H1 (cell line): ENCODE measurements at regions of chr11 and their contacts with region 1.

Region 1: GRCh38 chr11:798093-798713 is at the start of gene SLC25A22:
- DNase-seq: peak in 1 of 2 experiments; percentile 93
- H3K4me3 ChIP-seq: peak within 1 kb of the TSS; percentile 65 to 85 (median 81)
- H3K27ac ChIP-seq: no peak within 1 kb of the TSS; the same call in 1 of the 2 replicates
- H3K4me1 ChIP-seq: peaks cover 4 to 20% (median 15%) of the 10 kb centered on the region in 4 experiments
- H3K27me3 ChIP-seq: no peaks in the 10 kb centered on the region
- CTCF ChIP-seq: peak in 2 of 3 experiments; percentile 76 to 87; a peak in 3 of 4 replicates
- EP300 ChIP-seq: no peak
- POLR2A ChIP-seq: peak in 1 of 2 experiments; percentile 28; a peak in 1 of 3 replicates
- RAD21 ChIP-seq: peak; percentile 32 to 68; a peak in 3 of 4 replicates
- total RNA-seq, gene SLC25A22: 48.0 and 54.3 TPM in 2 replicates

Region 2: DNA sequence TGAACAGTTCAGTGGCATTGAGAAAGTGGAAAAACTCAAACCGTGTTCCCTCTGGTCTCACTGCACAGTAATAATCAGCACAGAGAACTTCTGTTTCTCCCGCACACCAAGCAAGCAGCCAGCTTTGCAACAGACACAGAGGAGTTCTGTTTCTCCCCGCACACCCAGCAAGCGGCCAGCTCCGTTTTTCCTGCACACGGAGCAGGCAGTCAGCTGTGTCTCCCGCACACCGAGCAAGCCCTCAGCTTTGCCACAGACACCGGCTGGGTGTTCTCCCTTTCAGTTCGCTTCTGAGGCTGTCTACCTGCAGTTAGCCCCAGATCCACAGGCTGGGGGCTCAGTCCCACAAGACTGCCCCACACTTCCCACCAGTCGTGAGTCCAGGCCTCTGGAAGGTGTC is 60.8 kb before region 1 on chr11:
- CTCF ChIA-PET with region 1: no interaction called
- POLR2A ChIA-PET with region 1: no interaction called
- DNase-seq: no peak
- H3K4me3 ChIP-seq: no peak overlapping the region
- H3K27ac ChIP-seq: no peak overlapping the region
- H3K4me1 ChIP-seq: no peaks in the 10 kb centered on the region
- H3K27me3 ChIP-seq: no peaks in the 10 kb centered on the region; a peak in 1 of 7 replicates
- CTCF ChIP-seq: no peak
- EP300 ChIP-seq: no peak
- POLR2A ChIP-seq: no peak
- RAD21 ChIP-seq: no peak

Region 3: DNA sequence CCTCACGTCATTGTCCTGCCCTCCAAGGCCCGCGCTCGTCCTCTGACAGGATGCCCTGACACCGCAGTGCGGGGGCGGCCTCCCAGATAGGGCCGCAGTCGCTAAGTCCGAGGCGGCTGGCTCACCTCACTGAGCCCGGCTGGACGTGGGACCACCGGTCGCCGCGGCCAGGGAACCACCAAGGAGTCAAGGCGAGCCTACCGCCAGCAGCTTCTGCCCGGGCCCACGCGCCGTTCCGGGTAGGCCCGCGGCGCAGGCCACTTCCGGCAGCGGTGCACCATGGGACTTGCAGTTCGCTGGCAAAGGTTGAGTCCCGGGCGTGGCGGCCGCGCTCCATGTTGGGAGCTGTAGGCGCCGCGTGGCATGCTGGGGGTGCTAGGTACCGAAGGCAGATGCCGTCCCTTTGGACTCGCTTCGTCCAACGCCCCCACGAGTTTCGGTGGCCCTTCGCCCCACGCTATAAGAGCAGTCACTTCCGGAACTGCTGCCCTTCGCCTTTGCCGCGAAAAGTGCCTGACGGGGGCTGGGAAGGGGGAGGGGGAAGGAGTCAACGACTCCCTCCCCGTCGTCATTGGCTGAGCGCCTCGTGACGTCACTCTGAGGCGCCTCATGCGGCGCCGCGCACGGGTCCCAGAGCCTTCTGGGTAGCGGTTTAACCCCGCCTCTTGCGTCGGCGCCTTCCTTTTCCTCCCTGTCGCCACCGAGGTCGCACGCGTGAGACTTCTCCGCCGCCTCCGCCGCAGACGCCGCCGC is 11.3 kb after region 1 on chr11 and contains the start of gene RPLP2:
- CTCF ChIA-PET with region 1: interaction called, 3 read pairs
- POLR2A ChIA-PET with region 1: interaction called, 1,917 read pairs
- DNase-seq: peak; percentile 80 to 100
- H3K4me3 ChIP-seq: peak within 1 kb of the TSS; percentile 66 to 100 (median 90)
- H3K27ac ChIP-seq: peak within 1 kb of the TSS; percentile 99
- H3K4me1 ChIP-seq: peaks cover 0 to 10% (median 3%) of the 10 kb centered on the region in 4 experiments; a peak in 4 of 7 replicates
- H3K27me3 ChIP-seq: no peaks in the 10 kb centered on the region
- CTCF ChIP-seq: no peak
- EP300 ChIP-seq: no peak; a peak in 1 of 3 replicates
- POLR2A ChIP-seq: peak in 1 of 2 experiments; percentile 90; a peak in 2 of 3 replicates
- RAD21 ChIP-seq: no peak
- total RNA-seq, gene RPLP2: 2,084 and 2,106 TPM in 2 replicates

Region 4: GRCh38 chr11:1041936-1042608 is 243.9 kb after region 1 on chr11:
- CTCF ChIA-PET with region 1: no interaction called
- POLR2A ChIA-PET with region 1: no interaction called
- DNase-seq: no peak
- H3K4me3 ChIP-seq: no peak overlapping the region
- H3K27ac ChIP-seq: no peak overlapping the region
- H3K4me1 ChIP-seq: no peaks in the 10 kb centered on the region; a peak in 1 of 7 replicates
- H3K27me3 ChIP-seq: no peaks in the 10 kb centered on the region; a peak in 1 of 7 replicates
- CTCF ChIP-seq: no peak
- EP300 ChIP-seq: no peak
- POLR2A ChIP-seq: no peak
- RAD21 ChIP-seq: no peak